WTC11 (cell line): ENCODE measurements at regions of chr12 and their contacts with region 1.

Region 1: DNA sequence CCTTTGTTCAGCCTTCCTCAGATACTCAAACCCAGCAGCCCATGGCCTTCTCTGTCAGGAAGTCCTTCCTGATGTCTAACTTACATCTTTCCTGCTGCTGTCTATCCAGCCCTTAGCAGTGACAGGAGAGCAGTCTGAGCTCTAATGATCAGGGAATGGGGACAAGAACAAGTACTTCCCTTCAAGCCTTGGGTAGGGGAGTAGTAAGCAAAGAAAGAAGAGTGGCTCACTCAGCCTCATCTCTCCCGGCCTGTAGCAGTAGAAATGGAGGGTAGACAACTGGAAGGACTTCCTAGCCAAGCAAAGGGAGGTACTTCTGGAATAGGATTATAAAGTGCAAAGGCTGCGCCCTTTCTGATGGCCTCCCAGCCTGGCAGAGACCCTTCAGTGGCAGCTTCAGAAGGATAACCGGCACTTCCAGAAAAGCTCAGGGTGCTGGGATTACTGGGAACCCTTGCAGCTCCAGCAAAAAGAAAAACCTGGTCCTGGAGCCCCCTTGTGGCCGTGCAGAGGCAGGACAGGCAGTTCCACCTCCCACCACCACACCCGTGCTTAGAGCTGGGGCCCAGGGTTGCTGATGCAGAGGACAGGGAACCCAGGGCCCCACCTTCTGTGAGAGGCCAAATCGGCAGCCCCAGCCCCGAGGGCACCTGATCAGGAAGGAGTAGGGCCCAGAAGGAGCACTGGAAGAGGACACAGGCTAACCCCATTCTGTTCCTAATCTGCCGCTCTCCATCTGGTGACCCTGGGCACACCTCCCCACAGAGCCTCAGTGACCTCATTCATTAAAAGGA is 12.4 kb upstream of the SMUG1 start:
- DNase-seq: peak; percentile 87
- ATAC-seq: peak; percentile 92
- H3K4me3 Mint-ChIP-seq: no peak overlapping the region
- H3K27ac Mint-ChIP-seq: no peak overlapping the region
- H3K4me1 Mint-ChIP-seq: peaks cover 16% of the 10 kb centered on the region
- H3K27me3 Mint-ChIP-seq: peaks cover 96% of the 10 kb centered on the region
- CTCF ChIP-seq: peak; percentile 93

Region 2: DNA sequence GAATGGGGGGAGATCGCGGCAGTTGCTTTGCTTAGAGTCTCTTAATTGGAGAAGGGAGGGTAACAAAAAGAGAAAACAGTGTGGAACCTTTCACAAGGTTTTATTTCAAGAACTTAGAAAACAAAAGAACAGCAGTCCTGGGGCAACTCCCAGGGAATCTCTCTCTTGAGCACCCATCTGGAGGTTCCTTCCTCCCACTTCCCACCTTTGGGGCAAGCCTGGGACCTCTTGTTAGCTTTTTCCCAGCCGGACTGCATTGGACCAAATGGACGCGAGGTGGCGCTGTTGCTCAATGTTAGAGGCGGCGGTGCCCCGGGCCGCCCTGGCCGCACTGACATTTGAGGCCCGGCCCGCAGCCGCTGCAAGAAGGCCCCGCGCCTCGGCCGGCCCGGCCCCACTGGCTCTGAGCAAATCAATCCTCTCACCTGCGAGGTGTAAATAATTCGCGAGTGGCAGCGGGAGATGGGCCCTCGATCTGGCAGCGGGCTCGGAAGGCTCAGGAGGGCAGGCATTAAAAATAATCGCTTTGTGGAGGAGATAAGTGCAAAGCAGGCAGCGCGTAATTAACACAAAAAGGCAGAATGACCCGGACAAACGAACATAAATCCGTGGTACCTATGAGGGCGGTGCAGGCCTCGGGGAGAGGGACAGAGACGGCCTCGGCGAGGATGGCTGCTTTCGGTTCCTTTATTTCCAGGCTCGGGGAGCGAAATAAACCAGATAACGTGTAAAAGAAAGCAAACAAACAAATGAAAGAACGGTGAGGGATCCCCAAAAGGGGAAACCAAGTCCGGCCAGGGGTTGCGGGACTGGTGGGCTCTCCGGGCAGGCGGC is 195.1 kb before region 1 on chr12:
- CTCF ChIA-PET with region 1: interaction called, 107 read pairs
- POLR2A ChIA-PET with region 1: no interaction called
- DNase-seq: peak; percentile 96
- ATAC-seq: peak; percentile 69
- H3K4me3 Mint-ChIP-seq: peak overlapping the region; percentile 34
- H3K27ac Mint-ChIP-seq: no peak overlapping the region
- H3K4me1 Mint-ChIP-seq: peaks cover 20% of the 10 kb centered on the region
- H3K27me3 Mint-ChIP-seq: peaks cover 100% of the 10 kb centered on the region
- CTCF ChIP-seq: peak; percentile 96

Region 3: DNA sequence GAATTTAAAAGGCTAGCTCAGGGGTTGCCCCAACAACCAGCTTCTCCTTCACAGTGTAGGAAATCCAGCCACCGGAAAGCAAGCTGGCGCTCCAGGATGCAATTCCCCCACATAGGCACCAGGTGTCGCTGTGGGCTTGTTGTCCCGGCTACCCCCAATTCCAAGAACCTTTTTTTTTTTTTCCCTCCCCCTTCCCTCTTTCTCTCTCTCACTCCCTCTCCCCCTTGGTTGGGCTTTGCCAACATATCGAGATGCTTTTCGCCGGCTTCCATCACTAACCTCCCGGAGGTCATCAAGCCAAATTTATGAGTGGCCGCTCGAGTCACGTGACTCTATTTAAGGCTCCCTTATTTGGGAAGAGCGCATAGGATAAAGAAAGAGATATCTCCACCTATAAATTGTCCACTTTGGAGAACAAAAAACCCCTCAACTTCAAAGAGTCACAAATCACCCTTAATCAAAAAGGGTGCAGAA is 168.5 kb before region 1 on chr12 and contains the start of gene HOXC5:
- CTCF ChIA-PET with region 1: interaction called, 149 read pairs
- POLR2A ChIA-PET with region 1: interaction called, 5 read pairs
- DNase-seq: peak; percentile 86
- ATAC-seq: peak; percentile 13
- H3K4me3 Mint-ChIP-seq: peak within 1 kb of the TSS; percentile 47
- H3K27ac Mint-ChIP-seq: no peak within 1 kb of the TSS
- H3K4me1 Mint-ChIP-seq: peaks cover 36% of the 10 kb centered on the region
- H3K27me3 Mint-ChIP-seq: peaks cover 99% of the 10 kb centered on the region
- CTCF ChIP-seq: peak; percentile 99
- total RNA-seq, gene HOXC5: not detected in 3 replicates

Region 4: GRCh38 chr12:54134850-54135249 is 66.3 kb before region 1 on chr12:
- CTCF ChIA-PET with region 1: interaction called, 49 read pairs
- POLR2A ChIA-PET with region 1: no interaction called
- DNase-seq: no peak
- ATAC-seq: no peak
- H3K4me3 Mint-ChIP-seq: no peak overlapping the region
- H3K27ac Mint-ChIP-seq: no peak overlapping the region
- H3K4me1 Mint-ChIP-seq: peaks cover 11% of the 10 kb centered on the region; the same call in 1 of the 2 replicates
- H3K27me3 Mint-ChIP-seq: peaks cover 100% of the 10 kb centered on the region
- CTCF ChIP-seq: no peak

Region 5: DNA sequence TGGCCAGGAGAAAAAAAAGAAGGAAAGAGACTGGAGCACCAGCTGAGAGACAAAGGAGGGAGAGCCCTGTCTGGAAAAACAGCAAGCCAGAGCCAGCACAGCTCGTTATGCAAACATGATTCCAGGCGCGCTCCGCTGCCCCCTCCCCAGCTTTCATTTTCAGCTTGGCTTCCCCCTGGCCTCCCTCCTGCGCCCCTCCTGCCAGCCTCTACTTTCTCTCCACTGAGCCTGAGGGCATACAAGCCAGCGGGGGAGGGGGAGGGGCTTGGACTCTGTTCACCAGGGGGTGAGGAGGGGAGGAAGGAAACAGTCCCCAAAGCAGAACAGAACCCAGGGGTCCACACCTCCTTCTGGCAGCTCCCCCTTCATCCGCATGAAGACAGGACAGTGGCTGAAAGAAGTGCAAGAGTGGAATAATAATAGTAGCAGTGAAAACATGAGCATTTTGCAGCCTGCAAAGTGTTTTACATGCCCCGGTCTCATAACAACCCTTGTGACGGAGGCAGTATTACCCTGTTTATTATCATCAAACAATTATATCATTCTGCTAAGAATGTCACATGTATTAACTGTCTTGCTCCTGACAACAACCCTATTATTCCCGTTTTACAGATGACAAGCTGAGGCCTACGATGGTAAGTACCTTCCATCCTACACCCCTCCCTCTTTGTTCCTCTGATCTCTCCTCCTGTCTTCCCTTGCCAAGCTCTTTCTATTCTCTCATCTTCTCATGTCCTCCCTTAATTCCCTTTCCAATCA is 36.6 kb before region 1 on chr12:
- CTCF ChIA-PET with region 1: interaction called, 19 read pairs
- POLR2A ChIA-PET with region 1: interaction called, 3 read pairs
- DNase-seq: peak; percentile 54
- ATAC-seq: peak; percentile 10; the same call in 1 of the 2 replicates
- H3K4me3 Mint-ChIP-seq: peak overlapping the region; percentile 30
- H3K27ac Mint-ChIP-seq: peak overlapping the region; percentile 15; the same call in 1 of the 2 replicates
- H3K4me1 Mint-ChIP-seq: peaks cover 41% of the 10 kb centered on the region
- H3K27me3 Mint-ChIP-seq: peaks cover 12% of the 10 kb centered on the region; the same call in 1 of the 2 replicates
- CTCF ChIP-seq: no peak

Region 6: GRCh38 chr12:54257332-54257731 is 56.1 kb after region 1 on chr12:
- CTCF ChIA-PET with region 1: no interaction called
- POLR2A ChIA-PET with region 1: no interaction called
- DNase-seq: no peak
- ATAC-seq: no peak
- H3K4me3 Mint-ChIP-seq: peak overlapping the region; percentile 27; the same call in 1 of the 2 replicates
- H3K27ac Mint-ChIP-seq: peak overlapping the region; percentile 99
- H3K4me1 Mint-ChIP-seq: peaks cover 49% of the 10 kb centered on the region
- H3K27me3 Mint-ChIP-seq: no peaks in the 10 kb centered on the region
- CTCF ChIP-seq: no peak